Gastrocnemius medialis (tissue), 4 donors: ENCODE measurements at regions of chr17 and their contacts with region 1.

Region 1: DNA sequence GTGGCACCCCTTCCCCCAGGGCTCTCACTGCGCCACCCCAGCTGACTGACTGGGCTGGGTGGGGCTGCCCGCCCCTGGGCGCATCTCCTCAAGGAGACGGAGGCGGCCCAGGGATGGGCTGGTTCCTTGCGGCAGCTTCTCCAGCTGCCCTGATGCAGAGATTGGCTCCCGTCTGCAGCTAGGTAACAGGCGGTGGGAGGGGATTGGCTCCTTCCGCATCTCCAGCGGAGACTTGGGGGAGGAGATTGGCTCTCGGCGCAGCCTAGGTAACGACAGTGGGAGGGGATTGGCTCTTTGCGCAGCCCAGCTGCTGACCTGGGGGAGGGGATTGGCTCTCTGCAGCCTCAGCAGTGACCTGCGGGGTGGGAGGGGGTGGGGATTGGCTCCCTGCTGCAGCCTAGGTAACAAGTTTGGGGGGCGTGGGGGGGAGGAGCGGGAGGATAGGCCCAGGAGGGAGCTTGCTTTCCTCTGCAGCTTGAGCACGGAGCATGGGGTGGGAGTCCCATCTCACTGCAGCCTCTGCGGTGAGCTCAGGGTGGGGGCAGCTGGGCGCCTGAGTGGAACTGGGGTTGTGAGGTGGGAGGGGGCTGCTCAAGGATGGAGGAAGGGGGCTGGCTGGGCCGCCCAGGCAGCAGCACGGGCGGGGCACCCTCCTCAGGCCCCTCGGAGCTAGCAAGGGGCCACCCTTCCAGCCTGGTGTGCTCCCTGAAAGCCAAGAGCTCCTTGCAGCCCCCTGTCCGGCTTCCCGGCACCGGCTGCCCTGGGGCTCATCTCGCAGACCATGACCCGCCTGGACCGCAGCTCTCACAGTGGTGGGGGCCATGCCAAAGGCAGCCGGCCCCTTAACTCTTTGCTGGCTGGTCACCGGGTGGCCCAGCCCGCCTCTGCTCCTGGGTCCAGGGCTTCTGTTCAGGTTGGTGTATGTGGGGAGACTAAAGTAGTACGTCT is 6.4 kb downstream of the NFE2L1 start:
- DNase-seq: peak; percentile 95 to 97
- ATAC-seq: peak; percentile 36 to 41
- H3K4me3 ChIP-seq: peak overlapping the region; percentile 73 to 93 (median 84)
- H3K27ac ChIP-seq: peak overlapping the region; percentile 96 to 99 (median 97)
- H3K4me1 ChIP-seq: peaks cover 80 to 87% of the 10 kb centered on the region in 2 donors
- H3K27me3 ChIP-seq: no peaks in the 10 kb centered on the region
- CTCF ChIP-seq: no peak
- POLR2A ChIP-seq: peak; percentile 83 to 91

Region 2: DNA sequence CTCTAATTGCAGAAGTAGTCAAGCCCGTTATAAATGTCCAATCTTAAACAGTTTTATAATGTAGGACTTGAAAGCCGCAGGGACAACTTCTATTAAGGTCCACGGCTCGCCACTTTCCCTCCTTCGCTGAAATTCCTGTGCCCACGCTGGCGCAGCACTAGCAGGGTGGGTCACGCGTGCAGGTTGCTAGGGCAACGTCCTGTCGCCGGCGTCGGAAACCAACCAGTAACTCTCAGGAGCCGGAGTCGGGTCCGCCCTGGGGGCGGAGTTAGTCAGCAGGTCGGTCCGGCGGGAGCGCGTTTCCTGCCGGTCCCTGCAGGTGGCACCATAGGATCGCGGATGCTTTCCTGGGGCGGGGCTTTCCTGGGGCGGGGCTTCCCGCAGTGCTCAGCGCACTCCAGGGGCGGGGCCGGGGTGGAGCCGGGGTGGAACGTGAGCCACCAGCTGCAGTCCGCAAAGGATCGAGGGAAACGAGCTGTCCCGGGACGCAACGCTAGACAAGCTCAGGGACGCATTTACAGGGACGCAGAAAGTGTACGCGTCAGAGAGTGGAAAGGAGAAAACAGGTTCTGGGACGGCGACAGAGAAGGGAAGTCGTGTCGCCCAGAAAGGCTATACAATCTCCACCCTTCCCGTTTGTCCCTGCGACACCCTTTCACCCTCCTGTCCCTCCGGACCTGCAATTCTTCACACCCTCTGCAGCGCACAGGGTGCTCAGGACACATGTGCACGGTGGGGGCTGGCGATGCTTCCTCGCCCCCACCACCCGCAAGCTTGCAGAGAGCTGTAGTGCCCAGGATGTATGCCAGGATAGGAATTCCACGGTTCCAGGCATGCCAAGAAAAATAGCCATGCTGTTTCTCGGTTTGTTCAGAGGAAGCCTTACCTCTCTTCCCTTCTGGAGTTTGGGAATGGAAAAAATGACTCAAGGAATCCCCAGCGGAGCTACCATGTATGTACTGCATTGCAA is 29.3 kb before region 1 on chr17:
- in situ Hi-C with region 1: no loop called
- intact Hi-C with region 1: no loop called
- DNase-seq: peak; percentile 95 to 96
- ATAC-seq: peak; percentile 82 to 84
- H3K4me3 ChIP-seq: peak overlapping the region; percentile 57 to 66 (median 60)
- H3K27ac ChIP-seq: peak overlapping the region; percentile 77 to 89 (median 81)
- H3K4me1 ChIP-seq: peaks cover 33 to 39% of the 10 kb centered on the region in 2 donors
- H3K27me3 ChIP-seq: no peaks in the 10 kb centered on the region
- CTCF ChIP-seq: peak; percentile 69 to 93 (median 90)
- POLR2A ChIP-seq: peak; percentile 38 to 60

Region 3: DNA sequence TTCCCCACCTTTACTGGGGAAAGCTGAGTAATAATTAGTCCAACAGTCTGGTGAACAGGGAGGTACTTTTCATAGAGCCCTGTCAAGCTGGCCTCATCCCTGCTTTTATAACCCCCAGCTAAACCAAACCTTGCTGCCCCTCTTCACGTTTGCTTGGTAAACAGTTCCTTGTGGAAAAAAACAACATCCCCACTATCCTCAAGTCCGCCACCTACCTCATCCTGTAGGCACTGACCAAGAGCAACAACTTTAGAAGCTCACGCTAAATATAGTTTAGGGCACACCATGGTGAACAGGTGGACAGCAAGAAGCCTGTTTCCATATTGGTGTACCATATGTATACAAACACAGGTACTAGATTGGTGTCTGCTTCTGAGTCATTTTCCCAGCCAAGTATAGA is 10.1 kb after region 1 on chr17:
- in situ Hi-C with region 1: no loop called
- intact Hi-C with region 1: loop called (anchors 1 kb)
- DNase-seq: peak; percentile 70 to 77
- ATAC-seq: peak; percentile 84 to 88
- H3K4me3 ChIP-seq: peak overlapping the region in 1 of 4 donors; percentile 19
- H3K27ac ChIP-seq: peak overlapping the region; percentile 96 to 99 (median 97)
- H3K4me1 ChIP-seq: peaks cover 65 to 73% of the 10 kb centered on the region in 2 donors
- H3K27me3 ChIP-seq: no peaks in the 10 kb centered on the region
- CTCF ChIP-seq: peak; percentile 39 to 53 (median 40)
- POLR2A ChIP-seq: peak in 1 of 2 donors; percentile 57

Region 4: DNA sequence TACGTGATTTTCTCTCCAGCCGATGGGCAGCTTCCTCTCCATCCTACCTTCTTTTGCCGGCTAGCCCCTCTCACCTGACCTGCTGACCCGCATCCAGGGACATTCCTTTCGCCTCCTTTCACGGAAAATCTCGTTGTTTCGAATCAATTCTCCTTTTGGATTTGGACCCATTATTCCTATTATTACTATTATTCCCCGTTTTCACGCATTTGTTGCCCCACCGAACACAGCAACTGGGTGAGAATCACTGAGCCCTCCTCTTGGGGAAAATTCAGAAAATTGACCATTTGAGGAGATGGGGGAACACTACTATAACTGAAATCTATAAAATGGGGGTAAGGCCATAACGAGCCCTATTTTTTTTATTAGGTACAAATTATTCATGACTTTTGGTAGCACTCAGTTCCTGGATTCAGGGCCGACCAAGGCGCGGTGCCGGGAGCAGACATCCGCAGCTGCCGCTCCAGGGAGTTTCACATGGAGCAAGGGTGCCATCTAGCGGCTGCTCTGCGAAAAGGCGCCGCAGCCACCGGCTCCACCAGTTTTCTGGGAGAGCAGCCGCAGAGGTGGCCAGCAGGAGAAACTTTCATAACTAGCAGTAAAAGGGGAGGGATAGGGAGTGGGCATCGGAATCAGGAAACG is 563.9 kb after region 1 on chr17:
- in situ Hi-C with region 1: no loop called
- intact Hi-C with region 1: no loop called
- DNase-seq: peak; percentile 64 to 76
- ATAC-seq: peak; percentile 89 to 90
- H3K4me3 ChIP-seq: peak overlapping the region in 1 of 4 donors; percentile 8
- H3K27ac ChIP-seq: no peak overlapping the region
- H3K4me1 ChIP-seq: no peaks in the 10 kb centered on the region
- H3K27me3 ChIP-seq: peaks cover 98 to 99% (median 99%) of the 10 kb centered on the region in 3 donors
- CTCF ChIP-seq: peak; percentile 93 to 98 (median 97)
- POLR2A ChIP-seq: no peak